Panc1 (cell line): ENCODE measurements at regions of chr13 and their contacts with region 1.

Region 1: GRCh38 chr13:72653506-72653905 is 73.9 kb downstream of the MZT1 start:
- DNase-seq: no peak
- ATAC-seq: no peak
- H3K4me3 ChIP-seq: no peak overlapping the region
- H3K27ac ChIP-seq: no peak overlapping the region
- H3K4me1 ChIP-seq: no peaks in the 10 kb centered on the region
- H3K27me3 ChIP-seq: no peaks in the 10 kb centered on the region
- CTCF ChIP-seq: no peak

Region 2: GRCh38 chr13:72638059-72638815 is 15.3 kb before region 1 on chr13:
- CTCF ChIA-PET with region 1: interaction called, 10 read pairs
- POLR2A ChIA-PET with region 1: no interaction called
- in situ Hi-C with region 1: no loop called
- intact Hi-C with region 1: no loop called
- DNase-seq: no peak
- ATAC-seq: no peak
- H3K4me3 ChIP-seq: no peak overlapping the region
- H3K27ac ChIP-seq: no peak overlapping the region
- H3K4me1 ChIP-seq: no peaks in the 10 kb centered on the region
- H3K27me3 ChIP-seq: no peaks in the 10 kb centered on the region
- CTCF ChIP-seq: no peak

Region 3: GRCh38 chr13:72694314-72694713 is 40.8 kb after region 1 on chr13:
- CTCF ChIA-PET with region 1: no interaction called
- POLR2A ChIA-PET with region 1: no interaction called
- in situ Hi-C with region 1: no loop called
- intact Hi-C with region 1: no loop called
- DNase-seq: no peak
- ATAC-seq: no peak
- H3K4me3 ChIP-seq: no peak overlapping the region
- H3K27ac ChIP-seq: no peak overlapping the region
- H3K4me1 ChIP-seq: no peaks in the 10 kb centered on the region
- H3K27me3 ChIP-seq: no peaks in the 10 kb centered on the region
- CTCF ChIP-seq: no peak

Region 4: GRCh38 chr13:72757792-72758535 is 104.5 kb after region 1 on chr13:
- CTCF ChIA-PET with region 1: no interaction called
- POLR2A ChIA-PET with region 1: no interaction called
- in situ Hi-C with region 1: no loop called
- intact Hi-C with region 1: no loop called
- DNase-seq: no peak
- ATAC-seq: 0 out of 2 replicates have a peak, but pooled peaks have one; percentile 30
- H3K4me3 ChIP-seq: no peak overlapping the region
- H3K27ac ChIP-seq: no peak overlapping the region
- H3K4me1 ChIP-seq: no peaks in the 10 kb centered on the region
- H3K27me3 ChIP-seq: no peaks in the 10 kb centered on the region
- CTCF ChIP-seq: no peak

Region 5: GRCh38 chr13:73189370-73190165 is 536.1 kb after region 1 on chr13:
- CTCF ChIA-PET with region 1: no interaction called
- POLR2A ChIA-PET with region 1: no interaction called
- in situ Hi-C with region 1: no loop called
- intact Hi-C with region 1: no loop called
- DNase-seq: no peak
- ATAC-seq: no peak
- H3K4me3 ChIP-seq: no peak overlapping the region; a peak in 1 of 4 replicates
- H3K27ac ChIP-seq: no peak overlapping the region
- H3K4me1 ChIP-seq: no peaks in the 10 kb centered on the region
- H3K27me3 ChIP-seq: no peaks in the 10 kb centered on the region
- CTCF ChIP-seq: no peak